Activated CD8-positive, alpha-beta T cell treated with anti-CD3 and anti-CD28 coated beads for 36 hours (primary cell): ENCODE measurements at regions of chr1 and their contacts with region 1.

Region 1: DNA sequence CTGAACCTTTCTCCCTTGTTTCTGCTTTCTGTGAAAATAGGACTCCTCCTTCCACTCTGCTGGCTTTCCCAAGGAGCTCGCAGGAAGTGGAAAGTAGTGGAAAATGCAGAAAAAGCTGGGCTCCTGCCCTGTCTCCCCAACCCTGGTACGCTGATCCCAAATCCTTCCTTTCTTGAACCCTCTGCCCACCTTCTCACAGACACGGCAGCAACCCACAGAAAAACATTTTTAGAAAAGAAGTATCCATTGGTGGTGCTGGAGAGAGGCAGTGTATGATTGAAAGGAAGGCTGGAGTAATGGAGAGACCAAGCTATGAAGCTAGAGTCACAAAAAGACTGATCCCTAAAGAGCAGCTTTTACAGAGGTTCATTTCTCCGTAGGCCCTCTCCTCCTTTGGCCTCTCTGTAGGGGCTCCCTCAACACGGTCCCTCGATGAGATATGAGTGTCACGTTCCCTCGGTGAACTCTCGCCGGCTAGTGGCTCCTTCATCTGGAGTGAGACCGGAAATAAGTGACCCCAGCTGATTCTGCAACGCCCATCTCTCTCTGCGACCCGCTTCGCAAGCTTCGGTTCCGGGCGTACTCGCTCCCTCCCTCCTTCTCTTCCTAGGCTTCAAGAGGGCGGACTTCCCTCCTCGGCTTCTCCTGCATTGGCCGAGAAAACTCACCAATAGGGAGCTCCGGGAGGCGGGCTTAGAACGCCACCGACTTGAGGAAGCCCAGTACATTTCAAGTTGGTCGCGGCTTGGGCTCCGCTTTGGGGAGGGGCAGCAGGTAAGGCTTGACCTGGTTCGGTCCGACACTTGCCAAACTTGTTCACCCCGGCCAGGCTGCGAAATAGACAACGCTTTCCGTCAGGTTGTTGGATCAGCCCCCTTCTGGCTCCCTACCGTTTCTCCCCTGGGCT is at the starts of genes ANKRD34A and POLR3GL:
- DNase-seq: peak; percentile 98
- ATAC-seq: peak; percentile 88
- H3K4me3 Mint-ChIP-seq: peak within 1 kb of the TSS; percentile 92
- H3K27ac Mint-ChIP-seq: peak within 1 kb of the TSS; percentile 91
- H3K4me1 Mint-ChIP-seq: peaks cover 30% of the 10 kb centered on the region
- H3K27me3 Mint-ChIP-seq: no peaks in the 10 kb centered on the region
- CTCF ChIP-seq: no peak
- total RNA-seq, gene ANKRD34A: 6.6 to 7.7 TPM
- total RNA-seq, gene POLR3GL: 22.3 to 23.3 TPM

Region 2: GRCh38 chr1:145804235-145805045 is 159.8 kb before region 1 on chr1:
- CTCF ChIA-PET with region 1: no interaction called
- POLR2A ChIA-PET with region 1: no interaction called
- intact Hi-C with region 1: no loop called
- DNase-seq: no peak
- ATAC-seq: no peak
- H3K4me3 Mint-ChIP-seq: no peak overlapping the region
- H3K27ac Mint-ChIP-seq: no peak overlapping the region
- H3K4me1 Mint-ChIP-seq: peaks cover 49% of the 10 kb centered on the region
- H3K27me3 Mint-ChIP-seq: no peaks in the 10 kb centered on the region
- CTCF ChIP-seq: no peak

Region 3: DNA sequence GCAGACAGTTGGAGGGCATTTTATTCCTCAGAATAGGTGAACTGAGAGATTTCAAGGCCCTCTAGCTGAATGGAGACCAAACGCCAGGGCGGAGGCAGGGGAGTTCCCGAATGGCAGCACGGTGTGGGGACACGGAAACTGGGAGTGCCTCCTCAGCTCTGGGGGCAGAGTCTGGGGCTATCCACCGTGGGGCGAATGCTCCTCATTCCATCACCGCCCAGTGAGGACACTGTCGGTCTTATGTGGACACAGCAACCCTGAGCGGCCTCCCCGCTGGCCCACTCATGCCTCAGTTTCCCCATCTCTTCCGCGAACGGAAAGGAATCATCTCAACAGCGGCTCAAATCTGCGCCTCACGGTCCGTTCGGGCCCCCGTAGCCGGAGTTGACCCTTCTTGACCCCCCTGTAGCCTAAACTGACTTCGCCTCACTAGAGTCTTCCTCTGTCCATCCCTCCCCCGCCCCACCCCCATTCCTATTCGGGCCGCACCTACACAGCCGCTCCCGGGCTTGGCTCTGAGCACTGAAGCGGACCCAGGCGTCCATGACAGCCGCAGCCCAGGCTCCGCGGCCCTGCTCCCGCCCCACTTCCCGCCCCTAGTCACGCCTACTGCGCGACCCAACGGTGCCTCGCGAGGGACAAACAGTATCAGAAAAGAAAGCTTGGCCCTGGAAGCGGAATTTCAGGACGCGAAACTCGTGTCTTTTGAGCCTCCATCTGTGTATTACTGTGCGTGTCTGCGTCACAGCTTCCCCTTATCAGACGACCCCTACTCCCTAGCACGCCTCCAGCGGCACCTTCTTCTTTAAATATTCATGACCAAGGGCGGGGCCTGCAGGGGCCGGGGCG is 45.9 kb before region 1 on chr1 and contains the start of gene PEX11B:
- CTCF ChIA-PET with region 1: interaction called, 5 read pairs
- POLR2A ChIA-PET with region 1: interaction called, 20 read pairs
- intact Hi-C with region 1: no loop called
- DNase-seq: peak; percentile 96
- ATAC-seq: peak; percentile 92
- H3K4me3 Mint-ChIP-seq: peak within 1 kb of the TSS; percentile 96
- H3K27ac Mint-ChIP-seq: peak within 1 kb of the TSS; percentile 97
- H3K4me1 Mint-ChIP-seq: peaks cover 51% of the 10 kb centered on the region
- H3K27me3 Mint-ChIP-seq: no peaks in the 10 kb centered on the region
- CTCF ChIP-seq: no peak
- total RNA-seq, gene PEX11B: 25.8 to 26.3 TPM

Region 4: DNA sequence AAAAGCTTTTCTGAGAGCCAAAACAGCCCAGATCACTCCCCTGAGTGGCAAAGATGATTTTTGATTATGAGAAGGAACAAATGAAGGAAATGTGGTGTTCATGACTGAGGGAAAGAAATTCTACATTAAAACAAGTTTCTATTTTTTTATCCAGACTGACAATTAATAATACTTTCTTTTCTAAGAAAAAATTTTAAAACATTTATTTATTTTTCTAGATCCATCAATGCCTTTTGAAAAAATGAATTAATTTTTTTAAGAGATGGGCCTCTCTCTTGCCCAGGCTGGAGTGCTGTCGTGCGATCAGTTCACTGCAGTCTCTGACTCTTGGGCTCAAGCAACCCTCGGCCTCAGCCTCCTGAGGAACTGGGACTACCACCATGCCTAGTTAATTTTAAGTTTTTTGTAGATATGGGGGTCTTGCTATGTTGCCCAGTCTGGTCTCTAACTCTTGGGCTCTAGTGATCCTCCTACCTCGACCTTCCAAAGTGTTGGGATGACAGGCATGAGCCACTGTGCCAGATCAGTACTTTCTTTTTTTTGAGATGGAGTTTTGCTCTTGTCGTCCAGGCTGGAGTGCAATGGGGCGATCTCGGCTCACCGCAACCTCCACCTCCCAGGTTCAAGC is 43.4 kb after region 1 on chr1:
- CTCF ChIA-PET with region 1: interaction called, 15 read pairs
- POLR2A ChIA-PET with region 1: interaction called, 6 read pairs
- intact Hi-C with region 1: no loop called
- DNase-seq: no peak
- ATAC-seq: no peak
- H3K4me3 Mint-ChIP-seq: peak overlapping the region; percentile 50
- H3K27ac Mint-ChIP-seq: peak overlapping the region; percentile 87
- H3K4me1 Mint-ChIP-seq: peaks cover 41% of the 10 kb centered on the region
- H3K27me3 Mint-ChIP-seq: no peaks in the 10 kb centered on the region
- CTCF ChIP-seq: no peak

Region 5: DNA sequence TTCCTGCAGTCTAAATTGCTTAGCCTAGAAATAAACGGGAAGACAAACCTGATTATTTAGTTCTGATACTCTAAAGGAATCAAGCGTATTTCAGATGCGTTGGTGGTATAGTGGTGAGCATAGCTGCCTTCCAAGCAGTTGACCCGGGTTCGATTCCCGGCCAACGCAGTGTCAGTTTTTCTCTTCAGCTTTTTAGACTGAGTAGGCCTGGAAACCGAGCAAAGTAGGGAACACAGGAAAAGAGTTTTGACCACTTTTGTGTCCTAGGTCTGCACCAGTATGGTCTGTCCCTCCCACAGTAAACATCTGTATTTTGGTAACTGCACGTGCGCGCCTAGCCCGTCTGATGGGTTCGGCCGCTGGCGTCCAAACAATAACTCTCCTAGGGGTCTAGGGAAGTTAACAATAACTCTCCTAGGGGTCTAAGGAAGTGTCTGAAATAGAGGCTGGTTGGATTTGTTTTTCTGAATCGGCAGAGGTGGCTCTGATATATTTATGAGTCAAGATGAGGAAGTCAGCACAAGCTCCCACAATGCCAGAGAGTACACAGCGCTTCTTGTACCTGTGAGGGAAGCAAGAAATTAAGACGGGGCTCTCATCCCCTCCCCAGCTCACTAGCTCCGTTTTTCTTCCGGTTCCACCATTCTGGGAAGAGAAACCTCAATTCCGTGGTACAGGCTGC is 72.9 kb after region 1 on chr1:
- CTCF ChIA-PET with region 1: interaction called, 5 read pairs
- POLR2A ChIA-PET with region 1: interaction called, 33 read pairs
- intact Hi-C with region 1: no loop called
- DNase-seq: peak; percentile 92
- ATAC-seq: peak; percentile 35
- H3K4me3 Mint-ChIP-seq: peak overlapping the region; percentile 92
- H3K27ac Mint-ChIP-seq: peak overlapping the region; percentile 98
- H3K4me1 Mint-ChIP-seq: peaks cover 25% of the 10 kb centered on the region
- H3K27me3 Mint-ChIP-seq: peaks cover 7% of the 10 kb centered on the region
- CTCF ChIP-seq: no peak

Region 6: GRCh38 chr1:146049436-146049835 is 85.2 kb after region 1 on chr1:
- CTCF ChIA-PET with region 1: no interaction called
- POLR2A ChIA-PET with region 1: interaction called, 26 read pairs
- intact Hi-C with region 1: no loop called
- DNase-seq: peak; percentile 16
- ATAC-seq: no peak
- H3K4me3 Mint-ChIP-seq: no peak overlapping the region
- H3K27ac Mint-ChIP-seq: no peak overlapping the region
- H3K4me1 Mint-ChIP-seq: peaks cover 21% of the 10 kb centered on the region
- H3K27me3 Mint-ChIP-seq: no peaks in the 10 kb centered on the region
- CTCF ChIP-seq: no peak